AG04450 (cell line): ENCODE measurements at regions of chr11 and their contacts with region 1.

Region 1: DNA sequence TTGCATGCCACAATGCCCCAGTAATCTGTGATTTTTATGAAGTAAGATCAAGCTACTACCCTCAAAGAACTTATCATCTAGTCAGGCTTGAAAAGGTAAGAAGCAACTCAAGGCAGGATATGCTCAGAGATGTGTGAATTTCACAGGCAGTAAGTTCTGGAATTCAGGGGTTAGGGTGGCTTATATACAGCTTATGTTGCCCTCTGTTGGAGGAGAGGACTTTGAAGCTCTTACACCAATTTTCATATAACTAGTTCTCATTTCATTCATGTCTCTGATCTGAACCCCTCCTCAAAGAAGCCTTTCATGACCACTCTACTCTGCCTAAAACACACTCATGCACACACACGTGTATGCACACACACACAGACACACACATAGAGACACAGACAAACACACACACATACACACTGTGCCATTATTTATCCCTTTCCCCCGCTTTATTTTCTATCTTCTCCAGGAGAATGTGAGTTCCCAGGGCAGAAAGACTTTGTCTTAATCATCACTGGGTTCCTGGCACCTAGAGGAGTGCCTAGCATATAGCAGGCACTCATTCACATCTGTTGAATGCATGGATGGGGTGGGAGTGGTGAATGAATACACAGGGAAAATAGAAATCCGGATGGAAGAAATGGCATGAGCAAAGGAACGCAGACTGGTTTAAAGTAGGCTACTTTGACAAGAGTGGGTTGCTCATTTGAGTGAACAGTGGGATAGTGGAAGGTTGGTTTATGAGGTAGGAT is 220.7 kb upstream of the ZBED5 start:
- DNase-seq: no peak
- H3K4me3 ChIP-seq: no peak overlapping the region
- H3K27ac ChIP-seq: no peak overlapping the region
- H3K27me3 ChIP-seq: peaks cover 42% of the 10 kb centered on the region
- CTCF ChIP-seq: peak; percentile 31

Region 2: GRCh38 chr11:10943968-10944367 is 134.5 kb before region 1 on chr11:
- CTCF ChIA-PET with region 1: no interaction called
- POLR2A ChIA-PET with region 1: no interaction called
- DNase-seq: peak; percentile 34
- H3K4me3 ChIP-seq: no peak overlapping the region
- H3K27ac ChIP-seq: peak overlapping the region; percentile 25
- H3K27me3 ChIP-seq: peaks cover 12% of the 10 kb centered on the region
- CTCF ChIP-seq: no peak

Region 3: DNA sequence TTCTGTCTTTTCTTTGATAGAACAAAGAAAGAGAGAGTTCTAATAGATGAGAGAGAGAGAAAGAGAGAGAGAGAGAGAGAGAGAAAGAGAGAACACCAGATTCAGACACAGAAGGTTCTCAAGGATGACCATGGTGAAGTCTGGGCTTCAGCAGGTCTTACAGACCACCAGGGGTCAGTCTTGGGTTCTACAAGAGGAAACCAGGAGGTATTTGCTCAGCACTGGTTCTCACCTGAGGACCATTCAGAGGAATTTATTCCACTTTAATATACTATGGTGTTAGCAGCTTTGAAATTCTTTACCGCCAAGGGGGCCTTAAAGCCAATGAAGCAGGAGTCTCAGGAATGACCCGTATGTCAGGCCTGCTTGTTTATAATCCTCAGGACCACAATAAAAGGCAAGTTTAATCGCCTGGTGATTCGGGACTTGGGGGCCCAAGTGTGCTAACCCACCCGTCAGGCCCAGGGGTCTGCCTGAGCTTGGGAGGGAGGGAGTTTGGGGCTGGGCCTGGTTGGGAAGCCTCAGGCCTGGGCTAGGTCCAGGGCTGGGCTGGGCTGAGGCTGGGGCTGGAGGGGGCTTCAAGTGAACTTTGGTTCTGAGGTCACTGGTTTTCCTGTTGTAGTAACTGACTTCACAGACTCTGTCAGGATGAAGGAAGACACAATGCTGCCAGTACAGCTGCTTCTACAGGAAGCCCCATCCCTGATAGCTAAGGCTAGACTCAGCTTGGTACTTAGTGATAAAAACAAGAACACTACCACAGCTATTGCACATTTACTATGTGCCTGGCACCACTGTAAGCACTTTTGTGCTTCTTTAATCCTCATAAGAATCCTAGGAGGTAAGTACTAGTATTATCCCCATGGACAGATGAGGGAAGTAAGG is 41.4 kb before region 1 on chr11:
- CTCF ChIA-PET with region 1: interaction called, 14 read pairs
- POLR2A ChIA-PET with region 1: no interaction called
- DNase-seq: no peak
- H3K4me3 ChIP-seq: no peak overlapping the region
- H3K27ac ChIP-seq: no peak overlapping the region
- H3K27me3 ChIP-seq: peaks cover under 1% of the 10 kb centered on the region
- CTCF ChIP-seq: peak; percentile 70

Region 4: DNA sequence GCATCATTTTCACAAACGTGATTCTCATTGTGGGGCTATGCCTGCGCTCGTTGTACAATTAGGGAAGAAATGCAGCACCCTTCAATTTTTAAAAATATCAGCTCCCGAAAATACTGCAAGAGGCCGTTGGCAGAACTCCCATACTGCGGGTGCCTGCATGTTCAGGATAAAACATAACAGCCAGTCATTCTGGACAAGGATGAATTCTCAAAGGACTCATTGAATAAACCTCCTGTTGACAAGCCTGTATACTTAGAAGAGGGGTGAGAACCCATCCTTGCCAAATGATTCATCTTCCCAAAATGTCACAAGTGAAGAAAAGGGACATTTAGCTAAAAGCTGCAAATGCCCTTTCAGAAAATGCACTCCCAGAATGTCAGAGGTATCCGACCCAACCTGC is 132.7 kb after region 1 on chr11:
- CTCF ChIA-PET with region 1: no interaction called
- POLR2A ChIA-PET with region 1: no interaction called
- DNase-seq: no peak
- H3K4me3 ChIP-seq: no peak overlapping the region
- H3K27ac ChIP-seq: no peak overlapping the region
- H3K27me3 ChIP-seq: peaks cover 49% of the 10 kb centered on the region
- CTCF ChIP-seq: no peak

Region 5: GRCh38 chr11:11731311-11732083 is 653.0 kb after region 1 on chr11:
- CTCF ChIA-PET with region 1: no interaction called
- POLR2A ChIA-PET with region 1: no interaction called
- DNase-seq: peak; percentile 6
- H3K4me3 ChIP-seq: no peak overlapping the region
- H3K27ac ChIP-seq: no peak overlapping the region
- H3K27me3 ChIP-seq: peaks cover 25% of the 10 kb centered on the region
- CTCF ChIP-seq: no peak